Colonic mucosa (tissue), 4 donors: ENCODE measurements at regions of chr9 and their contacts with region 1.

Region 1: GRCh38 chr9:27573634-27574590 is 631 bp upstream of the C9orf72 start:
- DNase-seq: peak; percentile 98
- H3K4me3 ChIP-seq: peak overlapping the region; percentile 81
- H3K27ac ChIP-seq: peak overlapping the region; percentile 97
- H3K4me1 ChIP-seq: no peaks in the 10 kb centered on the region
- H3K27me3 ChIP-seq: no peaks in the 10 kb centered on the region
- CTCF ChIP-seq: no peak

Region 2: DNA sequence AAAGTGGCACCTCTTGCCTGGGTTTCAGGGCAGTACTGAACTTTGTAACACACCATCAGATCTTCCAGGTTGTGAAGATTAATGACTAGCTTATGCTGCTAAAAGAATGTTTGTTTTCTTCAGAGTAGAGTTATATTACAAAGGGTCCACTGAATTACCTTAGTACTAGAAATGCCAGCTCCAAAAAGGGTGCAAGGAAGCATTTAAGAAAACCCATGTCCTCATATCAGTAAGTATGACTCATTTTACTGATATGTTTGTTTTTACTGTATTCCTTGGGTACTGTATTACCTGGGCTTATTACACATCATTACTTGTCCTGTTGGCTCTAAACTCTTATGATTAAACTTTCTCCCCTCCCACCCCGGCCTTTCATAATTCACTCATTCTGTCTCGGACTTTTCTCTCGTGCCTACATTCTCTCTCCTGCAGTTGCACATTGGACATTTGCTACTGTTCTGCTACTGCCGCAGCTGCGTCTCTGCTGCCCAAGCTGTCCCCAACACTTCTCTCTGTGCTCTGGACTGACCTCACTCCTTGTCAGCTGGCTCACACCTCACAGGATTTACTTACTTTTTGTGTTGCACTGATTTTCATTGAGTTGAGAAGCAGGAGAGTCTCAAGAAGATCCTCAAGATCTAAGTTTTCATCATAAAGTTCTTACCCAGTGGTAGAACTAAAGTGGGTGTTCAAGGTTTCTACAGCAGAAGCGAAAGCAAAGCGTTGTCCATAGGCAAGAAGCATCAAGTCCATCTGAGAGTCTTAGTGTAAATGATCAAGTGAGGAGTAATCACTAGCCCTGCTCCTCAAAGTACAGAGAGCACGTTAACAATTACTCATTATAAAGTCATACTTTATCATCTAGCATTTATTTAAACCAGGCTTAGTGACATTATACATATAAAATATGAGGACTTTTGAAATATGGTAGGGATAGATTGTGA is 52.6 kb after region 1 on chr9:
- intact Hi-C with region 1: no loop called
- DNase-seq: peak; percentile 32
- H3K4me3 ChIP-seq: no peak overlapping the region
- H3K27ac ChIP-seq: peak overlapping the region; percentile 32
- H3K4me1 ChIP-seq: no peaks in the 10 kb centered on the region
- H3K27me3 ChIP-seq: no peaks in the 10 kb centered on the region
- CTCF ChIP-seq: no peak

Region 3: GRCh38 chr9:27664121-27664779 is 90.3 kb after region 1 on chr9:
- intact Hi-C with region 1: loop called (anchors 5 kb)
- DNase-seq: peak; percentile 64
- H3K4me3 ChIP-seq: no peak overlapping the region
- H3K27ac ChIP-seq: peak overlapping the region; percentile 78
- H3K4me1 ChIP-seq: no peaks in the 10 kb centered on the region
- H3K27me3 ChIP-seq: no peaks in the 10 kb centered on the region
- CTCF ChIP-seq: no peak

Region 4: DNA sequence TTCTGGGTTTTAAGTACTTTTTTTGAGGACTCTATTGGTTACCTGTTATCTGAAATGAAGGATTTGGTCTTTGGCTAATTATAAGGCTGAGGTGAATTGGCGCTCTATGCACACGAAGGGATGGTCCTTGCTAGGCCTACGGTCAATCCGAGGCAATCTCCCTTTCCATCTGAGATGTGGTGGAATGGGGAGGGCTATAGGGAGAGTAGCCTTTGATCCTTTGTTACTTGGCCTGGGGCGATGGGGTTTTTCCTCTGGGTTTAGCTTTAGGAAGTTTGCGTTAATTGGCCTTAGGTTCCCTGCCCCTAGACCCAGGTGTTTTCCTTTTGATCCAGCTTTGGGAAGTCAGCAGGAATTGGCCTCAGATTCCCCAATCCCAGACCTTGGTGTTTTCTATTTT is 101.4 kb after region 1 on chr9:
- intact Hi-C with region 1: no loop called
- DNase-seq: no peak
- H3K4me3 ChIP-seq: no peak overlapping the region
- H3K27ac ChIP-seq: no peak overlapping the region
- H3K4me1 ChIP-seq: no peaks in the 10 kb centered on the region
- H3K27me3 ChIP-seq: no peaks in the 10 kb centered on the region
- CTCF ChIP-seq: no peak

Region 5: DNA sequence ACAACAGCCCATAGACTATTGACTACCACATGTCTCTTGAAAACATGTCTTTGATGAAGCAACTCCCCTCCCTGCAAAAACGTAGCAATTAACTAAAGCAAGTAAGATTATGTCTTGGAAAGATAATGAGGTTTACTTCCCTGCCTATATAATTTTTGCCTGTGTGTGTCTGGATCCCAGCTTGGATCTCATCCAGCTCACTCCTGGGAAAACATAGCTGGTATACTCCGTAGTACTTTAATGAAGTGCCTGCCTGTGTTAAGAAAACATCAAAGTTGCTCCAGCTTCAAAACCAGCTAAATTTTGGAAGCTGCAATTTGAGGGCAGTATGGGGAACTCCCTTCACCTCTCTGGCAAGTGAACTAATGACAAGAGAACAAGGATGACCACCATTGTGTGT is 181.9 kb after region 1 on chr9:
- intact Hi-C with region 1: no loop called
- DNase-seq: no peak
- H3K4me3 ChIP-seq: no peak overlapping the region
- H3K27ac ChIP-seq: no peak overlapping the region
- H3K4me1 ChIP-seq: no peaks in the 10 kb centered on the region
- H3K27me3 ChIP-seq: no peaks in the 10 kb centered on the region
- CTCF ChIP-seq: no peak